Heart left ventricle (tissue), 16 donors: ENCODE measurements at regions of chr11 and their contacts with region 1.

Region 1: GRCh38 chr11:62831520-62832335 is at the start of gene STX5:
- DNase-seq: peak; percentile 99 to 100 (median 100)
- ATAC-seq: peak; percentile 97 to 99 (median 98)
- H3K4me3 ChIP-seq: peak within 1 kb of the TSS; percentile 53 to 99 (median 93)
- H3K27ac ChIP-seq: peak within 1 kb of the TSS; percentile 87 to 98 (median 95)
- H3K4me1 ChIP-seq: peaks cover 10 to 42% (median 29%) of the 10 kb centered on the region in 12 donors
- H3K27me3 ChIP-seq: no peaks in the 10 kb centered on the region
- CTCF ChIP-seq: no peak
- POLR2A ChIP-seq: peak; percentile 12 to 87
- total RNA-seq, gene STX5: 16.2 to 26.8 (median 18.9) TPM

Region 2: GRCh38 chr11:62705880-62706849 is 125.6 kb before region 1 on chr11:
- intact Hi-C with region 1: no loop called
- DNase-seq: peak; percentile 94 to 98 (median 96)
- ATAC-seq: peak; percentile 65 to 90 (median 86)
- H3K4me3 ChIP-seq: peak overlapping the region; percentile 63 to 89 (median 78)
- H3K27ac ChIP-seq: peak overlapping the region; percentile 71 to 95 (median 88)
- H3K4me1 ChIP-seq: peaks cover 0 to 61% (median 34%) of the 10 kb centered on the region in 12 donors
- H3K27me3 ChIP-seq: no peaks in the 10 kb centered on the region
- CTCF ChIP-seq: no peak
- POLR2A ChIP-seq: peak in 1 of 2 donors; percentile 60

Region 3: DNA sequence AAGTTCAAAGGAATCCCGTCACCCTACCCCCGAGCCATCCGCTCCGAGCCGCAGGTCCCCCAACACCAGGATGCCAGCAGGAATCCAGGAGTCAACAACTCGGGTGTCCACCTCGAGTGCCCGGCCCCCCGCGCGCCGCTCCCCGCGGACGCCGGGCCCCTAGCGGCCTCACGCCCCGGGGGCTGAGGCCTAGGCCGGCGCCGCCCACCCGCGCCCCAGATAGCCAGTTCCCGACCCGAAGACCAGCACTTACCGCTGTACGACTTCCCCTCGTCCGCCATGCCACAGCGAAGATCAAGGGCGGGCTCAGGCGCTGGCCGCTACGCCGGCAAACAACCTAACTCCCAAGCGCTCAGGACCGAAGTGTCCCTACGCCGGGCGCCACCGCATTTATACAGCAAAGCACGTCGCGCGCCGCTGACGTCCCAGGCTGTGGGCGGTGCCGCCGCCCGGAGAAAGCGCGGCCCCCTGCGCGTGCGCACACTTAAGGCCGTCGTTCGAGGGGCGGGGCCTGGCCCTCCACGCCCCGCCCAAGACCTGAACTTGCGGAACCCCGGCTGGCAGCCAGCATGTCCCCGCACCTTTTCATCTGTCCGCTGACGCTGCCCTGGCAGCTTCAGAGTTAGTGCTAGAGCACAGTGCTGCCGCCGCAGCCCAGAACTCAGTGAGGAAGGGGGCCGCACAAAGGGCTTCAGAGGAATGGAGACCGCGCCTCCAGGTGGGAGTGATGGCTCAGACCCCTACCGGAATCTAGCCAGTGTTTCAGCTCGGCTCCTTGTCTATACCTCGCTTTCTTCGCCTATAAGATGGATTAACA is 26.4 kb before region 1 on chr11 and contains the start of gene NXF1:
- intact Hi-C with region 1: loop called in 1 of 10 experiments (anchors 1 kb)
- DNase-seq: peak; percentile 95 to 98 (median 95)
- ATAC-seq: peak; percentile 91 to 96 (median 94)
- H3K4me3 ChIP-seq: peak within 1 kb of the TSS; percentile 76 to 100 (median 86)
- H3K27ac ChIP-seq: peak within 1 kb of the TSS; percentile 58 to 95 (median 92)
- H3K4me1 ChIP-seq: peaks cover 0 to 39% (median 22%) of the 10 kb centered on the region in 12 donors
- H3K27me3 ChIP-seq: no peaks in the 10 kb centered on the region
- CTCF ChIP-seq: peak in 4 of 12 donors; percentile 17 to 24 (median 20)
- POLR2A ChIP-seq: peak; percentile 99 to 100
- total RNA-seq, gene NXF1: 28.5 to 51.7 (median 34.1) TPM

Region 4: DNA sequence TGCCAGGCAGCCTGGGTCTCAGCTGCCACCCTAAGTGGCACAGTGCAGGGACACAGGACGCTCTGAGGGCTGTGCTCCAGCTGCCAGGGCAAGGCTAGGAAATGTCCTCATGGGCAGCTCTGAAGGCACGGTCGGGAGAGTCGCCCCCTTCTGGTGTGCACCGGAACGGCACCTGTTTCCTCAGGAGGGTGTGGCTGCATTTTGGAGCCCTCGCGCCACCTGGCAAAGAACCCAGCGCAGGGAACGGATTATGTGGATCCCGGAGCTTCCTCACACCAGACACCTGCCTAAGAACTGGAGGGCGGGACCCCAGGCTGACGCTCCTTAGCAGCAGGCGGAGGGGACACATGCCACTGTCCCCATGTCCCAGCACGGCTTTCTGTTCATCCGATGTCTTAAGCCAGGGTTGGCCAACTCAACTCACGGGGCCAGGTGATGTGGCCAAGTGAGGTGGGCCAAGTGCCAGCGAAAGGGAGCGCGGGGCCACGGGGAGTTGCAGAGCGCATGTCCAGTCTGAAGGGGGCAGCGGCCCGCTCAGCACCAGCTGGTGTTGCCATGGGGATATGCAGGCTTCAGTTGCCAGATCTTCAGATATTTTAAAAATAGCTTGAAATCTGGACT is 189.1 kb after region 1 on chr11:
- intact Hi-C with region 1: no loop called
- DNase-seq: no peak
- ATAC-seq: no peak
- H3K4me3 ChIP-seq: no peak overlapping the region
- H3K27ac ChIP-seq: no peak overlapping the region
- H3K4me1 ChIP-seq: peaks cover 0 to 14% (median 3%) of the 10 kb centered on the region in 12 donors
- H3K27me3 ChIP-seq: peaks cover 0 to 20% (median 0%) of the 10 kb centered on the region in 9 donors
- CTCF ChIP-seq: peak in 7 of 12 donors; percentile 2 to 39 (median 27)
- POLR2A ChIP-seq: no peak